T-cell (primary cell): ENCODE measurements at regions of chr9 and their contacts with region 1.

Region 1: GRCh38 chr9:116687074-116687753 is at the start of gene TRIM32:
- DNase-seq: peak; percentile 78 to 96 (median 91)
- ATAC-seq: peak; percentile 97 to 98 (median 98)
- H3K4me3 ChIP-seq: peak within 1 kb of the TSS; percentile 75 to 77
- H3K4me3 Mint-ChIP-seq: peak within 1 kb of the TSS; percentile 90 to 95 (median 94)
- H3K27ac ChIP-seq: peak within 1 kb of the TSS; percentile 51
- H3K27ac Mint-ChIP-seq: peak within 1 kb of the TSS; percentile 90 to 92
- H3K4me1 ChIP-seq: peaks cover 4 to 30% of the 10 kb centered on the region in 2 experiments
- H3K4me1 Mint-ChIP-seq: peaks cover 60 to 66% (median 64%) of the 10 kb centered on the region in 3 donors
- H3K27me3 ChIP-seq: no peaks in the 10 kb centered on the region
- H3K27me3 Mint-ChIP-seq: no peaks in the 10 kb centered on the region
- total RNA-seq, gene TRIM32: 7.7 to 23.4 (median 19.8) TPM

Region 2: GRCh38 chr9:116706310-116707290 is 19.4 kb after region 1 on chr9:
- CTCF ChIA-PET with region 1: interaction called in 1 of 2 experiments, 3 read pairs
- POLR2A ChIA-PET with region 1: interaction called in 1 of 2 experiments, 11 read pairs
- DNase-seq: no peak
- ATAC-seq: no peak
- H3K4me3 ChIP-seq: no peak overlapping the region
- H3K4me3 Mint-ChIP-seq: no peak overlapping the region
- H3K27ac ChIP-seq: no peak overlapping the region
- H3K27ac Mint-ChIP-seq: no peak overlapping the region
- H3K4me1 ChIP-seq: peaks cover 0 to 7% of the 10 kb centered on the region in 2 experiments
- H3K4me1 Mint-ChIP-seq: peaks cover 10 to 11% (median 10%) of the 10 kb centered on the region in 3 donors
- H3K27me3 ChIP-seq: no peaks in the 10 kb centered on the region
- H3K27me3 Mint-ChIP-seq: no peaks in the 10 kb centered on the region

Region 3: DNA sequence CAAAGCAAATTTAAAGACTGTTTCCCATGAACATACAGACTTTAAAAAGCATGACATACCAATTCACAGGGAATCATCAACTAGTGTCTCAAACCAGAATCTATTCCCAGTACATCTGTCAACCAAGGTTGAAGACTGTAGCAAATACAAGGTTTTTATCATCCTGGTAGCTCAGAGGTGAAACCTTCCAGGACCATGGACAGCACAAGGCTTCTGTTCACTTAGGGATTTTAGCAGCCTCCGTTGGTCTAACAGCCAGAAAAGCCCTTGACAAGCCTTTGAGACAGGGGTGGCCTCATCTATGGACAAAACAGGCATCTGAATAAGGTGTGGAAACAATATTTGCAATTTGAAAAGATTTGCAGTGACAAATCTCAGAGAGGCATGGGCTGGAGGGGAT is 118.9 kb after region 1 on chr9:
- CTCF ChIA-PET with region 1: no interaction called
- POLR2A ChIA-PET with region 1: no interaction called
- DNase-seq: no peak
- ATAC-seq: no peak
- H3K4me3 ChIP-seq: no peak overlapping the region
- H3K4me3 Mint-ChIP-seq: no peak overlapping the region
- H3K27ac ChIP-seq: no peak overlapping the region
- H3K27ac Mint-ChIP-seq: no peak overlapping the region
- H3K4me1 ChIP-seq: no peaks in the 10 kb centered on the region
- H3K4me1 Mint-ChIP-seq: no peaks in the 10 kb centered on the region
- H3K27me3 ChIP-seq: no peaks in the 10 kb centered on the region
- H3K27me3 Mint-ChIP-seq: peaks cover 0 to under 1% of the 10 kb centered on the region in 2 donors